Mammary epithelial cell (primary cell): ENCODE measurements at regions of chr18 and their contacts with region 1.

Region 1: DNA sequence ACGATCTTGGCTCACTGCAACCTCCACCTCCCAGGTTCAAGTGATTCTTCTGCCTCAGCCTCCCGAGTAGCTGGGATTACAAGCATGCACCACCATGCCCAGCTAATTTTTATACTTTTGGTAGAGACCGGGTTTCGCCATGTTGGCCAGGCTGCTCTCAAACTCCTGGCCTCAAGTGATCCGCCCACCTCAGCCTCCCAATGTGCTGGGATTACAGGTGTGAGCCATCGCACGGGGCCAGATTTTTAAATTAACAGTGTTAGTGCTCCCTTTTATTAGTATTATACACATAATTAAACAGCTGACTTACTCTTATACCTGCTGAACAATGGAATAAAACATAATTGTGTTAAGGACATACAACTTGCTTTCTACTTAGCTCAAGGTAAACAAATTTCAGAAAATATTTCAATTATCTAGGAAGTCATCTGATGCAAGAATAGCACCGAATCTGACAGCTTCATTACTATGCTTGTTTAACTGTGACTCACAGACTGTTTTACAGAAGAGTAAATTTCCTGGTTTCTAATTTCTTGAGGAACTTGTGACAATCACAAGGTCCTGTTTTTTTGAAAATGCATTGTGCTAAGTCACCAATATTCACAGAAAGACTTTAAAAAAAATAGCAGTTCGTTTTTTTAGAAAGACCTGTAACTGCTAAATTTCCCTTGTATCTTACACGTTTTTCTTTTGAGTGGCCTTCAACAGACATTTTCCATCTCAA is 51.2 kb downstream of the SPIRE1 start:
- DNase-seq: peak; percentile 70
- H3K4me3 ChIP-seq: no peak overlapping the region
- H3K27ac ChIP-seq: peak overlapping the region; percentile 96
- H3K4me1 ChIP-seq: peaks cover 31% of the 10 kb centered on the region
- H3K27me3 ChIP-seq: no peaks in the 10 kb centered on the region
- CTCF ChIP-seq: no peak

Region 2: DNA sequence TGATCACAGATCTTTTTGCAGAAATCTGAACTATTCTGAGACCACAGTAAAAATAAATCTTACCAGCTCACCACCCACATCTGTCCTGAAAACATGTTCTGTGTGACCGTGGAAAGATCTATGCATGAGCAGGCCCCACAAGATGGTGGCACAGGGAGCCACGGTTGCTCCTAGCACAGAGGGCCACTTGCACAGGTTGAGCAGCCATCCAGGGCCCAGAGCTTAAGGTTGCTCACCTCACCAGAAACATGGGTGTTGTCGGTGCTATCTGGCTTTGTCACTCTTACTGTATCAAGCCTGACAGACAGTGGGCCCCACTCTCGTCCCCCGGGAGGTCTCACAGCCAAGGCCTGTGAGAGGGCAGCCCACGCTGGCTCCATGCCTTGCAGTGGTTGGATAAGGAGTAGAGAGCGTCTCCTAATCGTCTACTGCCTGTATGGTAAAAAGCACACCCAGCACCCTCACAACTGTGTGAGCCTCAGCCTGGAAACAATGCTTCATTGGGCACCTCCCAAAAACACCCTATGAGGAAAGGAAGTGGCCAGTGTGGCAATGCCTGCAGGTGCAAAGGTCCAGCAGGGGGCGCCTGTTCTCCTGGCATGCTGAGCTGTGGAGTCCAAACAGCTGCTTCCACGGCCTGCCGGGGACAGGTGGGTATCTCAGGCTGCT is 279.1 kb before region 1 on chr18:
- CTCF ChIA-PET with region 1: no interaction called
- dilution Hi-C with region 1: loop called (anchors 10 kb)
- in situ Hi-C with region 1: no loop called
- intact Hi-C with region 1: no loop called
- DNase-seq: peak; percentile 76
- H3K4me3 ChIP-seq: no peak overlapping the region
- H3K27ac ChIP-seq: no peak overlapping the region
- H3K4me1 ChIP-seq: no peaks in the 10 kb centered on the region
- H3K27me3 ChIP-seq: no peaks in the 10 kb centered on the region
- CTCF ChIP-seq: peak; percentile 94 to 98

Region 3: DNA sequence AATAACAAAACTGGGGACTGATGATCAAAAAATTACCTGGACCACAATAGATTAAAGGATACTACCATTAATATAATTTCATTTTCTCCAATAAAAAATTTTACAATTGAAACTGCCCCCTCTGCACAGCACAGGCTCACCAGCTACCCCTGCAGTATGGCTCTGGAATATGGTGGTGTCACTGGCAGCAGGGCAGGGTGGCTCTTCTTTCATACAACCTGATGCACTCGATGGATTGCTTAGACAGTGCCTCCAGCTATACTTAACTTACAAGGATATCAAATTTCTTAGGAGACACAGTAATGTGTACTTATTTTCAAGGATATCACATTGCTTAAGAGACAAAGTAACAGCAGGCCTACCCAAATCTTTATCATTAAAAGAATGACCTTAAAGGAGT is 75.0 kb before region 1 on chr18:
- CTCF ChIA-PET with region 1: no interaction called
- dilution Hi-C with region 1: loop called (anchors 10 kb)
- in situ Hi-C with region 1: no loop called
- intact Hi-C with region 1: no loop called
- DNase-seq: no peak
- H3K4me3 ChIP-seq: no peak overlapping the region
- H3K27ac ChIP-seq: no peak overlapping the region
- H3K4me1 ChIP-seq: peaks cover 6% of the 10 kb centered on the region
- H3K27me3 ChIP-seq: no peaks in the 10 kb centered on the region
- CTCF ChIP-seq: peak in 1 of 2 donors; percentile 32

Region 4: GRCh38 chr18:12628706-12629702 is 22.2 kb after region 1 on chr18:
- CTCF ChIA-PET with region 1: no interaction called
- dilution Hi-C with region 1: no loop called
- in situ Hi-C with region 1: no loop called
- intact Hi-C with region 1: loop called (anchors 2 kb)
- DNase-seq: peak; percentile 63
- H3K4me3 ChIP-seq: peak overlapping the region in 1 of 3 experiments; percentile 29
- H3K27ac ChIP-seq: peak overlapping the region; percentile 81
- H3K4me1 ChIP-seq: peaks cover 15% of the 10 kb centered on the region
- H3K27me3 ChIP-seq: no peaks in the 10 kb centered on the region
- CTCF ChIP-seq: no peak

Region 5: DNA sequence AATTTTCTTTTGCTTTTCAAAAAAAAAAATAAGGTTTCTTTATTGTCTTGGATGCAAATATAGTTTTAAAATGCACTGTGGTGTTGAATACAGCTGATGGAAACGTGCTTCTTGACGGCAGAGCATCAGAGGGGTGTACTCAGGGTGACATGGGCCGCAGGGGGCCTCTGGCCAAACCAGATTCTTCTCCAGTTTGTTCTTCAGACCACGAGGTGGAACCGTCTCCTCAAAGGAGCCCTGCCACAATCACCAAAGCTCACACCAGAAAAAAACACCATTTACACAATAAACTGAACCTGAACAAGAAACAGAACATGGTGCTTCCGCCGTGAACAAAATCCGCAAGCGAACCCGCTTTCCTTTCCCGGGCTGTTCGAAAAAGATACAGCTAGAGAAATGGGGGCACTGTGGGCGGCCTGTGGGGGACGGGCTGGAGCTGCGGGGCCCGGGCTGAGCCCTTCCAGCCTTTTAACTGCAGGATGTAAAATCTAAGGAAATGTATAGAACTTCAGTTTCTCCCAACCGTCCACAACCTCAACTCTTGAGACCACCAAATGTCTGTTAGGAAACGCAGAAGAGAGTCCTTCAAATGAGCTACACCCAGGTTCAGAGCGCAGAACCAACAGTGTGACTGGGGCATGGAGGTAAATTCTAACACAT is 130.6 kb after region 1 on chr18:
- CTCF ChIA-PET with region 1: no interaction called
- dilution Hi-C with region 1: loop called (anchors 10 kb)
- in situ Hi-C with region 1: no loop called
- intact Hi-C with region 1: no loop called
- DNase-seq: no peak
- H3K4me3 ChIP-seq: no peak overlapping the region
- H3K27ac ChIP-seq: no peak overlapping the region
- H3K4me1 ChIP-seq: peaks cover 8% of the 10 kb centered on the region
- H3K27me3 ChIP-seq: no peaks in the 10 kb centered on the region
- CTCF ChIP-seq: no peak